ENCODE measurements at regions of chr17 and their contacts with region 1.

Region 1: GRCh38 chr17:44044067-44044466 is 22.4 kb downstream of the LSM12 start:
- DNase-seq: peak; percentile 79
- H3K4me3 Mint-ChIP-seq: no peak overlapping the region
- H3K27ac Mint-ChIP-seq: no peak overlapping the region
- H3K4me1 Mint-ChIP-seq: peaks cover 24% of the 10 kb centered on the region
- H3K27me3 Mint-ChIP-seq: no peaks in the 10 kb centered on the region
- CTCF ChIP-seq: no peak

Region 2: DNA sequence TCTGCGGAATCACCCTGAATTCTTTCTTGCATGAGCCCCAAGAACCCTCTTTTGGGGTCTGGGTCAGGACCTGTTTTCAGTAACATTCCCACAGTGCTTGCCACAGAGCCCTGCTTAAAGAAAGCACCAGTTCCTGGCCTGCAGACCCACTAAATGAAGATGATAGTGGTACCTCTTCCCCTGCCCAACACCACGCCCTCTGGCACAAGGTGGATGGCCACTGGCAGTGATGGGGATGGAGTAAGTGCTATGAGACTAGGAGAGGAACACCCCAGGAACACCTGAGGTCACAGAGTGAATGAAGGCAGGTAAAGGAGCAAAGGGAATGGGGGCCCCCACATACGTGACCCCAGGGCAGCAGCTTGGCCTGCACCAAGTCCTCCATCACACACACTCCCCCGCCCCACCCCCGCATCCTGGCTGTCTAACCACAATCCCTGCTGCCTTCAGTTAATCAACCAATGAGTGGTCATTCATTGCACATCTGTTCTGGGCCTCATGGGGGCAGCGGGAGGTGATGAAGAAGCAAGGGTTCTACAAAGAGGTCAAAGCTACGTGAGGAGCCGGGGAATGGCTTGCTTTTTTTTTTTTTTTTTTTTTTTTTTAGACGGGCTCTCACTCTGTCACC is 97.9 kb before region 1 on chr17:
- CTCF ChIA-PET with region 1: interaction called, 41 read pairs
- POLR2A ChIA-PET with region 1: interaction called, 7 read pairs
- intact Hi-C with region 1: loop called (anchors 1 kb)
- DNase-seq: peak; percentile 11
- H3K4me3 Mint-ChIP-seq: no peak overlapping the region
- H3K27ac Mint-ChIP-seq: no peak overlapping the region
- H3K4me1 Mint-ChIP-seq: no peaks in the 10 kb centered on the region
- H3K27me3 Mint-ChIP-seq: peaks cover 12% of the 10 kb centered on the region
- CTCF ChIP-seq: no peak

Region 3: DNA sequence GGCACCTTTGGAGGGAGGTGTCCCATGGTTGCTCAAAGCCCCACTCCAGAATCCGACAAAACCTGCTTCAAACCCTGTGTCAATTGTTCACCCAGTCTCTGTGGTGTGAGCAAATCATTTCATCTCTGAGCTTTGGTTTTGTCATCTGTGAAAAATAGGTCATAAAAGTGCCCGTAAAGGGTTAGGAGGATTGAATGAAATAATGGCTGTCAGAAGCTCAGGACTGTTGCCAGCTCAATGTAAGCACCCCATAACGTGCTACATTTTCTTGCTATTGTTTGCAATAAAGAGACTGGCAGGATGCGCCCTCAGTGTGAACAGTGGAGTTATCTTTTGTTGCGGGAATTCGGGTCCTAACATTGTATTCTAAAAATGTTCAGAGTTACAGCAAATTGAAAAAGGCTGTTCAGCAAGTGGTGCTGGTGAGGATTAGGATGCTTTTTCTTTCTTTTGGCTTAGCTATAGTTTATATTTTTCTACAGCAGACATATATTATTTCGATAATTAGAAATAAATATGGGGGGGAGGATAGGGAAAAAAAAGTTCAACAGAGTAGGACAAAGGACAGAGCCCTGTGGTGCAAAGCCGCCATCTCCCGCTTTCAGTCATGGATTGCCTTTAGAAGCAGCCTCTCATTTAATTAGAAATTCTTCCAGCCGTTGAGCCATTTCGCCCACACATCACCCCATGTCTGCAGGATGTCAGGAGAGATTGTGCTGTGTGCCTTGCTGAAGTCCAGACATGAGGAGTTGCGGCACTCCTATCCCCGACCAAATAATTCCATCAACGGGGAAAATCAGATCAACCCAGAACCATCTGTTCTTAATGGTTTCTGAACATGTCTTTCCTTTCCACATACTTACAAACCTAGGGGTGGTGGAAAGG is 69.4 kb before region 1 on chr17:
- CTCF ChIA-PET with region 1: no interaction called
- POLR2A ChIA-PET with region 1: no interaction called
- intact Hi-C with region 1: no loop called
- DNase-seq: no peak
- H3K4me3 Mint-ChIP-seq: no peak overlapping the region
- H3K27ac Mint-ChIP-seq: no peak overlapping the region
- H3K4me1 Mint-ChIP-seq: no peaks in the 10 kb centered on the region
- H3K27me3 Mint-ChIP-seq: peaks cover 25% of the 10 kb centered on the region
- CTCF ChIP-seq: no peak

Region 4: GRCh38 chr17:44024271-44024663 is 19.8 kb before region 1 on chr17:
- CTCF ChIA-PET with region 1: interaction called, 13 read pairs
- POLR2A ChIA-PET with region 1: interaction called, 5 read pairs
- intact Hi-C with region 1: no loop called
- DNase-seq: no peak
- H3K4me3 Mint-ChIP-seq: no peak overlapping the region
- H3K27ac Mint-ChIP-seq: no peak overlapping the region
- H3K4me1 Mint-ChIP-seq: peaks cover 6% of the 10 kb centered on the region
- H3K27me3 Mint-ChIP-seq: no peaks in the 10 kb centered on the region
- CTCF ChIP-seq: no peak

Region 5: DNA sequence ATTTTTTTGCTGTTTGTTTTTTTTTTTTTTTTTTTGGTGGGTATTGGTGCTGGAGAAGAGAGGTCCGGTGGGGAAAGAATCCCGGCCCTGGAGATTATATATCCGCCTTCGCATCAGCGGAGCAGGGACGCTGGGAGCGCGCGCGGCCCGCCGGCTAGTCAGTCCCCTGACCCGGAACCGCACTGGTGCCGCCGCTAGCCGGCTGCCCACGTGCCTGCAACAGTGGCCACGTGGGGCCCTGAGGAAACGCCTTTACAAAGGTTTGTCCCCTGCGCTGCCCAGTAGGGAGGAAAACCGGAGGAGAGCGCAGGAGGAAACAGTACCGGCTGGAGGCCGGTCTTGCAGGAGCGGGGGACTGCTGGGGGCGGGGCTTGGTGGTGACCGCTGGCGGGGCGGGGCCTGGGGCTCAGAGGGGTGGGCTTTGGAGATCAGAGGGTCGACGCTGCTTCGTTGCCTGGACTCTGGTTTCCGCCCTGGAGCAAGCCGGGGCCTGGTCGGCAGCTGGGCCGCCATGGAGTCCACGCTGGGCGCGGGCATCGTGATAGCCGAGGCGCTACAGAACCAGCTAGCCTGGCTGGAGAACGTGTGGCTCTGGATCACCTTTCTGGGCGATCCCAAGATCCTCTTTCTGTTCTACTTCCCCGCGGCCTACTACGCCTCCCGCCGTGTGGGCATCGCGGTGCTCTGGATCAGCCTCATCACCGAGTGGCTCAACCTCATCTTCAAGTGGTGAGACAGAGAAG is 26.6 kb after region 1 on chr17 and contains the start of gene G6PC3:
- CTCF ChIA-PET with region 1: interaction called, 6 read pairs
- POLR2A ChIA-PET with region 1: interaction called, 23 read pairs
- intact Hi-C with region 1: no loop called
- DNase-seq: peak; percentile 98
- H3K4me3 Mint-ChIP-seq: peak within 1 kb of the TSS; percentile 92
- H3K27ac Mint-ChIP-seq: peak within 1 kb of the TSS; percentile 97
- H3K4me1 Mint-ChIP-seq: peaks cover 26% of the 10 kb centered on the region
- H3K27me3 Mint-ChIP-seq: no peaks in the 10 kb centered on the region
- CTCF ChIP-seq: no peak
- total RNA-seq, gene G6PC3: 70.6 and 89.4 TPM in 2 replicates

Region 6: DNA sequence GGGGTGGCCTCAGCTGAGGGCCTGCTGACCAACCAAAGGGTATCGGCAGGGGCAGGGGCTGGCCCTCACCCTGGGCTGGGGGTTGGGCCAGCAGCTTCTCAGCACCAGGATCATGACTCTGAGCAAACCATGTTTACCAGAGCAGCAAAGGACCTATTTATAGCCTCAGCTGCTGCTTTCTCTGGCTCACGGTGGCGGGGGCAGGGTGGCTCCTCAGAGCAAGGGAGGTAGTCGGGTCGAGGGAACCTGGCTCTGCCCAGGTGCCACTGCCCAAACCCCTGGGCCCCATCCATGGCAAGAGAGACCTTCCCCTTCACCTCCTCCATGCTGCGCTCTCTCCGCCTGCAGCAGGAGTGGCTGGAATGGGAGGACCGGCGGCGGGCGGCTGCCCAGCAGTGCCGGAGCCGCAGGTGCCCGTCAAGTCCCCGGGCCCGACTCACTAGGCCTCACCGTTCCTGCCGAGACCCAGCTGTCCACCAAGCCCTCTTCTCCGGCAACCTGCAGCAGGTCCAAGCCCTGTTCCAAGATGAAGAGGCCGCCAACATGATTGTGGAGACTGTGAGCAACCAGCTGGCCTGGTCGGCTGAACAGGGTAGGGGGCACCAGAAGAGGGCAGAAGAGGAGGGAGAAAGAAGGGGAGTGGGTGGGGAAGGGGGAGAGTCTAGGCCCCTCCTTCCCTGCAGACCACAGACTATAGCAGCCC is 126.6 kb after region 1 on chr17 and contains the start of gene ASB16:
- CTCF ChIA-PET with region 1: interaction called, 33 read pairs
- POLR2A ChIA-PET with region 1: interaction called, 4 read pairs
- intact Hi-C with region 1: no loop called
- DNase-seq: no peak
- H3K4me3 Mint-ChIP-seq: no peak within 1 kb of the TSS
- H3K27ac Mint-ChIP-seq: no peak within 1 kb of the TSS
- H3K4me1 Mint-ChIP-seq: peaks cover 11% of the 10 kb centered on the region
- H3K27me3 Mint-ChIP-seq: no peaks in the 10 kb centered on the region
- CTCF ChIP-seq: no peak
- total RNA-seq, gene ASB16: not detected in 2 replicates

Measured in MCF 10A (cell line).